ENCODE measurements at regions of chr19 and their contacts with region 1.

Region 1: DNA sequence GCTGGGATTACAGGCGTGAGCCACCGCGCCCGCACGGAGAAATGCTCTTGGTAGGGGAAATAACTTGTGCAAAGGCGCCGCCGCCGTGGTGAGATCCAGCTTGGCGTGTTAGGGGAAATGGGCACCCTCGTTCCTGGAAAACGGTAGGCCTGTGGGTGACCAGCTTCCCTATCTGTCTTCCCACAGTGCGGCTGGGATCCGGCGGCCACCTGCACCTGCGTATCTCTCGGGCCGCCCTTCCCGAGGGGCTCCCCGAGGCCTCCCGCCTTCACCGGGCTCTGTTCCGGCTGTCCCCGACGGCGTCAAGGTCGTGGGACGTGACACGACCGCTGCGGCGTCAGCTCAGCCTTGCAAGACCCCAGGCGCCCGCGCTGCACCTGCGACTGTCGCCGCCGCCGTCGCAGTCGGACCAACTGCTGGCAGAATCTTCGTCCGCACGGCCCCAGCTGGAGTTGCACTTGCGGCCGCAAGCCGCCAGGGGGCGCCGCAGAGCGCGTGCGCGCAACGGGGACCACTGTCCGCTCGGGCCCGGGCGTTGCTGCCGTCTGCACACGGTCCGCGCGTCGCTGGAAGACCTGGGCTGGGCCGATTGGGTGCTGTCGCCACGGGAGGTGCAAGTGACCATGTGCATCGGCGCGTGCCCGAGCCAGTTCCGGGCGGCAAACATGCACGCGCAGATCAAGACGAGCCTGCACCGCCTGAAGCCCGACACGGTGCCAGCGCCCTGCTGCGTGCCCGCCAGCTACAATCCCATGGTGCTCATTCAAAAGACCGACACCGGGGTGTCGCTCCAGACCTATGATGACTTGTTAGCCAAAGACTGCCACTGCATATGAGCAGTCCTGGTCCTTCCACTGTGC is 2.4 kb downstream of the GDF15 start:
- DNase-seq: no peak
- H3K4me3 ChIP-seq: peak overlapping the region; percentile 66
- CTCF ChIP-seq: peak; percentile 97

Region 2: GRCh38 chr19:18074190-18074589 is 314.1 kb before region 1 on chr19:
- CTCF ChIA-PET with region 1: no interaction called
- POLR2A ChIA-PET with region 1: no interaction called
- DNase-seq: no peak
- H3K4me3 ChIP-seq: no peak overlapping the region
- CTCF ChIP-seq: no peak

Region 3: DNA sequence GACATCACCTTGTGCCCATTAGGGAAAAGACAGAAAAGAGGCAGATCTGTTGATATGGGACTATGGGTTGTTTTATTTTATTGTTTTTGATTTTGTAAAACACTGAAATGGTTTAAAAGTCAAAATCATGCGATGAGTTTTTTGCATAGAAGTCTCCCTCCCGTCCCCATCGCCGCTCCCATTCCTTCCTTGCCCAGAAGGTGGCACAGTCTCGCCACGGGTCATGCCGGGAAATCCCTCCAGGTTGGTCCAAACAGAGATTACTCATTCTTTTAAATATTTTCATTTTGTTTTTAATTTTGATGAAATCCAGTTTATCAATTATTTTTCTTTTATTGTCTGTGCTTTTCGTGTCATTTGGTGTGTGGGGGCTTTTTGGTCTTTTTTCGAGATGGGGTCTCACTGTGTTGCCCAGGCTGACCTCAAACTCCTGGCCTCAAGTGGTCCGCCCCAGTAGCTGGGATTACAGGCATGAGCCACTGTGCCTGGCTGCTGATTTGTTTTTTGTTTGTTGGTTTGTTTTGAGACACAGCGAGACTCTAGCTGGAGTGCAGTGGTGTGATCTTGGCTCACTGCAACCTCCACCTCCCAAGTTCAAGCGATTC is 38.7 kb before region 1 on chr19:
- CTCF ChIA-PET with region 1: interaction called, 32 read pairs
- POLR2A ChIA-PET with region 1: no interaction called
- DNase-seq: no peak
- H3K4me3 ChIP-seq: no peak overlapping the region
- CTCF ChIP-seq: peak; percentile 84

Region 4: GRCh38 chr19:18364826-18365528 is 23.4 kb before region 1 on chr19:
- CTCF ChIA-PET with region 1: interaction called, 27 read pairs
- POLR2A ChIA-PET with region 1: interaction called, 8 read pairs
- DNase-seq: peak; percentile 99
- H3K4me3 ChIP-seq: no peak overlapping the region
- CTCF ChIP-seq: no peak

Region 5: GRCh38 chr19:18401580-18402112 is 13.3 kb after region 1 on chr19:
- CTCF ChIA-PET with region 1: interaction called, 71 read pairs
- POLR2A ChIA-PET with region 1: no interaction called
- DNase-seq: no peak
- H3K4me3 ChIP-seq: no peak overlapping the region
- CTCF ChIP-seq: peak; percentile 54

Region 6: DNA sequence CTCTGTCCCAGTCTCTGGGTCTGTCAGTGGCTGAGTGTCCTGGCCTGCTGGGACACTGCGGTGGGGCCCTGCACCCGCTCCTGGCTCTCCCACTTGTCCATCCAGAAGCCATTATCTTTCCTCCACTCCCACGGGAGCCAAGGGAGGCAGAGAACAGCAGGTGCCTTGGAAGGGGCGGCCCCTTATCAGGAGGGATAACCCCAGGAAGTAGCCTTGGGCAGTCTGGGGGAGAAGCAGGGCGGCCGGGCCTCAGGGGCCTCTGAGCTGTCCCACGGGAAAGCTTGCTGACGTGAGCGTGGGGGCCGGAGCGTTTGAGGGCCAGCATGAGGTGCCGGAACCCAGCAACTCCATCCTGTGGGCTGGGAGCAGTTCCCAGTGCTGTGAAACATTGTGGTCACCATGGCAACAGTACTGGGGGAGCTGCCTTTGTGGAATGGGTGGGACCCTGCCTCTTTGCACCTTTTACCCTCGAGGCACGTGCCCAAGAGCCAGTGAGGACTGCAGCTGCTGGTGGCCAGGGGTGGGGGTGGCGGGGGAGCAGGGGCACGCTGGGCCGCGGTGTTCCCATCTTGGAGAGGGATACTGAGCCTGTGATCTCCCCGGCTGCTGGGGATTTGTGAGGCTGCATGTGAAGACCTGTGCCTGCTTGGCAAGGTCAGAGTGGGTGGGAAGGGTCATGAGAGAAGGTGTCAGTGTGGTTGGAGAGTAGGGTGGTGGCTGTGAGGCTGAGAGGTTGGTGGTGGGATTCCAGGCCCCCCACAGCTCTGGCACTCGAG is 269.4 kb after region 1 on chr19:
- CTCF ChIA-PET with region 1: no interaction called
- POLR2A ChIA-PET with region 1: no interaction called
- DNase-seq: no peak
- H3K4me3 ChIP-seq: no peak overlapping the region
- CTCF ChIP-seq: no peak

Measured in AG04449 (cell line).